WTC11 (cell line): ENCODE measurements at regions of chr1 and their contacts with region 1.

Region 1: GRCh38 chr1:197180252-197180878 is 33.9 kb upstream of the ASPM start:
- DNase-seq: no peak
- ATAC-seq: peak; percentile 77
- H3K4me3 Mint-ChIP-seq: no peak overlapping the region
- H3K27ac Mint-ChIP-seq: no peak overlapping the region
- H3K4me1 Mint-ChIP-seq: no peaks in the 10 kb centered on the region
- H3K27me3 Mint-ChIP-seq: no peaks in the 10 kb centered on the region
- CTCF ChIP-seq: no peak

Region 2: GRCh38 chr1:197356723-197357533 is 176.6 kb after region 1 on chr1:
- CTCF ChIA-PET with region 1: interaction called, 29 read pairs
- POLR2A ChIA-PET with region 1: no interaction called
- DNase-seq: peak; percentile 25
- ATAC-seq: peak; percentile 91
- H3K4me3 Mint-ChIP-seq: no peak overlapping the region
- H3K27ac Mint-ChIP-seq: no peak overlapping the region; the same call in 1 of the 2 replicates
- H3K4me1 Mint-ChIP-seq: peaks cover 4% of the 10 kb centered on the region; the same call in 1 of the 2 replicates
- H3K27me3 Mint-ChIP-seq: no peaks in the 10 kb centered on the region
- CTCF ChIP-seq: peak; percentile 74